Cardiac septum (tissue), 1 donor: ENCODE measurements at regions of chr17 and their contacts with region 1.

Region 1: GRCh38 chr17:68576811-68577496 is 24.2 kb downstream of the FAM20A start:
- DNase-seq: no peak

Region 2: GRCh38 chr17:68560966-68561720 is 15.8 kb before region 1 on chr17:
- intact Hi-C with region 1: no loop called
- DNase-seq: no peak

Region 3: DNA sequence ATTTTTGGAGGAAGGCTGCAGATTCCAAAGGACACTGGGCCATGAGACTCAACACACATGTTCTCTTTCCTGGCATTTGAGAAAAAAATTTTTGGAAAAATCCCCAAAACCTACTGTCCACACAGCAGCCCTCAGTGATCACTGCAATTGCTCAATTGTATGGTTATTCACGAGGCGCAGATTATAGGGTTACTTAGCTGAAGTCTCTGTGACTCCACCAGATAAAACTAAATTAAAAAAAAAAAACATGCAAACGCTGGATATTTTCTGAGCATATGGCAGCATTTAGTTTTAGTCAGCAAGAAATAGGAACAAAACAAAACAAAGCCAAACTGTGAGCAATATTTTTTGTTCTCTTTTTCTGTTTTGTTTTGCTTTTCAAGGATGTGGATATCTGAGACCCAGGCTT is 108.0 kb after region 1 on chr17:
- intact Hi-C with region 1: loop called (anchors 10 kb)
- DNase-seq: no peak